Panc1 (cell line): ENCODE measurements at regions of chr4 and their contacts with region 1.

Region 1: DNA sequence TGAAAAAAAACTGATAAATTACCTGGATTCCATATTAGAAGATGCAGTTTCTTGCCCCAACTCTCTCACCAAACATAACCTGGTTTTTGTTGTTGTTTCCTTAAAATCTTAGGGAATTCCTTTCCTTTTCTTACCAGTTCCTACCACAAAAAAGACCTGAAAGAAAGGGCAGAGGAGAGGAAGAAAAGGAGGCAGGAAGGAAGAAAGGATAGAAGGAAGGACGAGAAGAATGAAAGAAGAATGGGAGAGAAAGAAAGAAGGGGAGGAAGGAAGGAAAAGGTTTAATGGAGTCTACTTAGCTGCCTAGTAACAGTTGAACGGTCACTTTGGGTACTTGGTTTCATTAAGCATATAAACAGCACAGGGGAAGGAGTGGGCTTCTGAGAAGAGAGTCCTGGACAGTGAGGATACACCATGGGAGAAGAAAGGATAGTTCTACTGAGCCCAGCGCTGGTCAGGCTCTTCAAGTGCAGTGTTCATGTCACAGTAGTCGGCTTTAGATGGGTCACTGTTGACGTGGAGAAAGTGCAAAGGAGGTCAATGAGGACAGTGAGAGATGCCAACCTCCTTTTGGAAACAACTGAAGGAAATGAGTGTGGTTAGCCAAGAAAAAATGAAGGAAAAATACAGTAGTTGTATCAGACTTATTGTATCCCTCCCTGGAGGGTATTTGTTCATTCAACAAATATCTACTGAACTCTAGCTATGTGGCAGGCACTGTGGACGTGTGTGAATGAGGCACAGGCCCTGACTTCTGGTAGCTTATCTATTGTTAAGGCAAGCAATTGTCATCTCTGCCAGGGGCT is 1.1 kb upstream of the CHIC2 start:
- DNase-seq: no peak
- ATAC-seq: no peak
- H3K4me3 ChIP-seq: peak overlapping the region in 1 of 2 experiments; percentile 80; a peak in 3 of 4 replicates
- H3K27ac ChIP-seq: peak overlapping the region; percentile 89
- H3K4me1 ChIP-seq: peaks cover 15% of the 10 kb centered on the region
- H3K27me3 ChIP-seq: no peaks in the 10 kb centered on the region
- CTCF ChIP-seq: no peak

Region 2: GRCh38 chr4:54041100-54041499 is 24.4 kb before region 1 on chr4:
- CTCF ChIA-PET with region 1: no interaction called
- POLR2A ChIA-PET with region 1: interaction called, 12 read pairs
- in situ Hi-C with region 1: no loop called
- intact Hi-C with region 1: no loop called
- DNase-seq: no peak
- ATAC-seq: no peak
- H3K4me3 ChIP-seq: no peak overlapping the region
- H3K27ac ChIP-seq: no peak overlapping the region
- H3K4me1 ChIP-seq: no peaks in the 10 kb centered on the region
- H3K27me3 ChIP-seq: no peaks in the 10 kb centered on the region
- CTCF ChIP-seq: no peak

Region 3: DNA sequence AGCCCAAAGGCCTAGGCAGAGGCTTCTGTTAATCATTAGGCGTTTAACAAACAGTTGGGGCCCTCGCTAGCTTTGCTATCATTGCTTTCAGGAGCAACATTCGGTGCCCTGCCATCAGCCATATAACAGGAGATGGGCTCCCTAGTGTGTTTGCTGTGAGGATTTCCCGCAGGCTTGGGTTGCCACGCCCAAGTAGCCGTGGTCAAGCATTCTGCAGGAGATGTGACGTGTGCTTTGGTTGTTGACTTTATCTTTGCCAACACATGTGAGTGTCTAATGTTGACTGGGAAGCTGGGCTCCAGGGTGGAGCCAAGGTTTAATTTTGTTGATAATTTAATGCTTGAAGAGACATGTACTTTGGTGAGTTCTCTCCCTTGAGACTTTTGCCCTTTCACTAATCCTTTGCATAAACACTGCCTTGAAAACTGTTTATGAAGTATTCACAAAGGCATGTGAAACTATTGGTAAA is 407.6 kb after region 1 on chr4:
- CTCF ChIA-PET with region 1: no interaction called
- POLR2A ChIA-PET with region 1: no interaction called
- in situ Hi-C with region 1: no loop called
- intact Hi-C with region 1: no loop called
- DNase-seq: no peak
- ATAC-seq: no peak
- H3K4me3 ChIP-seq: no peak overlapping the region
- H3K27ac ChIP-seq: no peak overlapping the region
- H3K4me1 ChIP-seq: no peaks in the 10 kb centered on the region
- H3K27me3 ChIP-seq: no peaks in the 10 kb centered on the region
- CTCF ChIP-seq: no peak